AG04449 (cell line): ENCODE measurements at regions of chr17 and their contacts with region 1.

Region 1: DNA sequence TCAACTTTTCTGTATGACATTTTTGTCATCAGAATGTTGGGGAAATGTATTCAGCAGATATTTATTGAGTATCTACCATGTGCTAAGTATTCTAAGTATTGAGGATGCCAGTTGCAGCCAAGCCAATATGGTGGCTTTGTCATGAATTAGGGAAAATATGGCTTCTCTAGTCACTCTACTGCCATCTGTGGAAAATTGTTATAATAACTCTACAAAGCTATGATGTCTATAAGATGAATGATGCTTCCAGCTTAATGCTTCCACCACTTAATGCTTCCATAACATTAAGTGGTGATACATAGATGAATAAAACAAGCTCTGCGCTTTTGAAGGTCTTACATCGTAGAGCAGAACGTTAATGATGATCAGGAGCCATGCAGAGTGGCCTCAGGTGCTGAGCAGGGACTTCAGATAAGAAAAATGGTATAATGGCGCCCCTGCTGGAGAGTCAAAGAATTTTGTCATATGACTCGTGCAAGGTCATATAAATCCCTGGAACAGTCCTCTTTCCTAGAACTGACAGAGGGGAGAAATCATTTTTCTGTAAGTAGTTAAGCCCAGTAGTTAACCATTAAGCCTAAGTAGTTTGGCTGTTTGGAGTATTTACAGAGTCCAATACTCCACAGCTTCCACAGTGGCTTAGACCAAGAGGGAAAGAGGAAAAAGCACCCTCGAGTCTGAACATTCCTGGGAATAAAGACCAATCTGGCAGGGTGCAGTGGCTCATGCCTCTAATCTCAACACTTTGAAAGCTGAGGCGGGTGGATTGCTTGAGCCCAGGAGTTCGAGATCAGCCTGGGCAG is 2.7 kb upstream of the TMIGD1 start:
- DNase-seq: no peak
- H3K4me3 ChIP-seq: no peak overlapping the region
- CTCF ChIP-seq: peak; percentile 7

Region 2: DNA sequence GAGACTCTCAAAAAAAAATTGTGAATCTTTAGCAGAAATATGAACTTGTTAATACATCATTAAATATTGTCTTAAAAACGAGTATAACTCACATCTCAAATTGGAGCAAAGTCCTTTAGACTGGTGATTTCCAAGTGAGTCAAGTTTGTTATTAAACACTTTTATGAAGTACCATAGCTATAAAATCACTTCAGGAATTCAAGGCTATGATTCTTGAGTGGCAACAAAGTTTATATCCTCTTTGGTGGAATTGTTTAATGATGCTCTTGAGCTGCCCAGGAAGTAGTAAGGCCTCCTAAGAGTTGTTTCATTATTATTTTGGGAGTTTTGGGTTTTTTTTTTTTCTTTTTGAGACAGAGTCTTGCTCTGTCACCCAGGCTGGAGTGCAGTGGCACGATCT is 28.2 kb before region 1 on chr17:
- CTCF ChIA-PET with region 1: interaction called, 13 read pairs
- POLR2A ChIA-PET with region 1: no interaction called
- DNase-seq: no peak
- H3K4me3 ChIP-seq: no peak overlapping the region
- CTCF ChIP-seq: no peak

Region 3: DNA sequence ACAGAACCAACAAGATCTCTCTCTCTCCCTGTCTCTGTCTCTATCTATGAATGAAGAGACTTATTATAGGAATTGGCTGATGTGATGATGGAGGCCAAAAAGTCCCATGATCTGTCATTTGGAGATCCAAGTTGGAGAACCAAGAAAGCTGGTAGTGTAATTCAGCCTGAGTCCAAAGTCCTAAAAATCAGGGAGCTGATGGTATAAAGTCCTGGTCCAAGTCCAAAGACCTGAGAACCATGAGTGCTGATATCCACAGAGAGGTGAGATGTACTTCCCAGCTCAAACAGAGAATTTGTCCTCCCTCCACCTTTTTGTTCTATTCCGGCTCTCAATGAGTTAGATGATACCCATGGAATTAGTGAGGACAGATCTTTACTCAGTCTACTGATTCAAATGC is 12.7 kb after region 1 on chr17:
- CTCF ChIA-PET with region 1: interaction called, 14 read pairs
- POLR2A ChIA-PET with region 1: no interaction called
- DNase-seq: no peak
- H3K4me3 ChIP-seq: no peak overlapping the region
- CTCF ChIP-seq: no peak

Region 4: DNA sequence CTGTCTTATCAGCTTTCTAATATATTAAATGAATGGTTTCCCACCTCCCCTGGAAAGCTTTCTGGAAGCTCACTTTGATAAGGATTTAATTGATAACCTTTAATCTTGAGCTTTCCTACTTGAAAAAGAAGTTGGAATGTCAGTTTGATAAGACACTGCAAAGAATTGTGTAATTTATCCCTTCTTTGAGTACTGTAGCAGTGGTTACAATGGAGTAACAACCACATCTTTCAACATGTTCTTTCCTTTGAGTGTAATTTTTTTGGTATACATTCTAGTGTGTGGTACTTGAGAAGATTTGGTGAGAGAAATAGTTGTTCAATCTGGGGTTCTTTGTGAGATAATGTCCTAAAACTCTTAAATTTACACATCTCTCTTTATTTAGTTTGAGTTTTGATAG is 85.6 kb after region 1 on chr17:
- CTCF ChIA-PET with region 1: no interaction called
- POLR2A ChIA-PET with region 1: no interaction called
- DNase-seq: no peak
- H3K4me3 ChIP-seq: no peak overlapping the region
- CTCF ChIP-seq: no peak

Region 5: DNA sequence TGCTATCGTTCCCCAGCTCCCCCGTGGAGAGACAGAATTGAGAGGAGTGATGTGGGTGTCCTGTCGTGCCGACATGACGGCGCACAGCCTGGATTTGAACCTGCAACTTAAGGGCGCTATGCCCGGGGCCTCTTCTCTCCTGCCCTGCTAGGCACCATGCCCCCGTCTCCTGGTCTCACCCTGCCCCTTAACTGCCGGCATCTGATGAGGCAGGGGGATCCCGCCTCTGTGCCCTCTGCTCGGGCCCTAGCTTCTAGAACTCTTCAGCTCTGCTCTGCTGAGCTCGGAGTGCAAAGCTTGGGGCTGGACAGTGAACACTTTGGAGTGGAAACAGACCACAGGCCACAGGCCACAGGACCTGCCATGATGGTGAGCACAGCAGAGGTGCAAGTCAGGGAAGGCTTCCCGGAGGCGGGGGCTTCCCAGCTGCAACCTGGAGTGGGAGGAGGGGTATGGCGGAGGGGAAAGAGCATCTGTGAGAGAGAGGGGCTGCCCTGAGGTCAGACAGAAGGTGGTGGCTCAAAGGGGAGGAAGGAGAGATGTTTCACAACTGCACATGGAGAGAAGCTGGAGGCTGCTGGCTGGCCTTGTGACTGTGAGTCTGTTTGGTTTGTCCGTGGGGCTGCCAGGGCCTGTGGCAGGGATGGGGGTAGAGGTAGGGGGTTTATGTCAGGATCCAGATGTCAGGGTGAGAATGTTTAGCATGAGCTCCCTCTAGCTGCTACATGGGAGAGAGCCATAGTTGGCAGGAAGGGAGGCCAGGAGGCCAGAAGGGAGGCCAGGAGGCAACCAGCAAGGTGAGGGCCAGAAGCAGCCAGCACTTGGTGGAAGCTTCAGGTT is 380.1 kb after region 1 on chr17:
- CTCF ChIA-PET with region 1: interaction called, 14 read pairs
- POLR2A ChIA-PET with region 1: no interaction called
- DNase-seq: no peak
- H3K4me3 ChIP-seq: no peak overlapping the region
- CTCF ChIP-seq: peak; percentile 5